HCT116 (cell line): ENCODE measurements at regions of chr1 and their contacts with region 1.

Region 1: GRCh38 chr1:169809370-169810095 is 14.8 kb upstream of the METTL18 start:
- DNase-seq: peak; percentile 21
- ATAC-seq: peak; percentile 68
- H3K4me3 ChIP-seq: no peak overlapping the region
- H3K27ac ChIP-seq: no peak overlapping the region
- H3K4me1 ChIP-seq: no peaks in the 10 kb centered on the region
- H3K27me3 ChIP-seq: no peaks in the 10 kb centered on the region
- CTCF ChIP-seq: peak in 2 of 3 experiments; percentile 60 to 62; a peak in 3 of 6 replicates
- POLR2A ChIP-seq: no peak
- RAD21 ChIP-seq: peak; percentile 77

Region 2: GRCh38 chr1:169546087-169546995 is 263.2 kb before region 1 on chr1:
- CTCF ChIA-PET with region 1: interaction called, 5 read pairs
- POLR2A ChIA-PET with region 1: no interaction called
- RAD21 ChIA-PET with region 1: no interaction called
- intact Hi-C with region 1: loop called (anchors 1 kb)
- DNase-seq: peak; percentile 65
- ATAC-seq: peak; percentile 89
- H3K4me3 ChIP-seq: no peak overlapping the region
- H3K27ac ChIP-seq: no peak overlapping the region
- H3K4me1 ChIP-seq: no peaks in the 10 kb centered on the region
- H3K27me3 ChIP-seq: no peaks in the 10 kb centered on the region
- CTCF ChIP-seq: peak; percentile 77 to 84 (median 82)
- POLR2A ChIP-seq: no peak
- RAD21 ChIP-seq: peak; percentile 92

Region 3: GRCh38 chr1:169586395-169587255 is 222.9 kb before region 1 on chr1 and contains the start of gene F5:
- CTCF ChIA-PET with region 1: interaction called, 15 read pairs
- POLR2A ChIA-PET with region 1: no interaction called
- RAD21 ChIA-PET with region 1: no interaction called
- intact Hi-C with region 1: loop called (anchors 5 kb)
- DNase-seq: peak; percentile 58
- ATAC-seq: peak; percentile 100
- H3K4me3 ChIP-seq: peak within 1 kb of the TSS; percentile 28 to 48
- H3K27ac ChIP-seq: no peak within 1 kb of the TSS
- H3K4me1 ChIP-seq: peaks cover 2 to 12% of the 10 kb centered on the region in 2 experiments; a peak in 3 of 4 replicates
- H3K27me3 ChIP-seq: no peaks in the 10 kb centered on the region
- CTCF ChIP-seq: peak; percentile 42 to 73 (median 68); a peak in 5 of 6 replicates
- POLR2A ChIP-seq: no peak
- RAD21 ChIP-seq: peak; percentile 73
- total RNA-seq, gene F5: 0.37 TPM

Region 4: GRCh38 chr1:169601093-169601881 is 208.2 kb before region 1 on chr1:
- CTCF ChIA-PET with region 1: interaction called, 21 read pairs
- POLR2A ChIA-PET with region 1: no interaction called
- RAD21 ChIA-PET with region 1: interaction called in 1 of 2 experiments, 3 read pairs
- intact Hi-C with region 1: loop called (anchors 1 kb)
- DNase-seq: no peak
- ATAC-seq: peak; percentile 67
- H3K4me3 ChIP-seq: no peak overlapping the region
- H3K27ac ChIP-seq: no peak overlapping the region
- H3K4me1 ChIP-seq: no peaks in the 10 kb centered on the region
- H3K27me3 ChIP-seq: peaks cover 5% of the 10 kb centered on the region; the same call in 1 of the 2 replicates
- CTCF ChIP-seq: peak; percentile 25 to 59 (median 50); a peak in 4 of 6 replicates
- POLR2A ChIP-seq: no peak
- RAD21 ChIP-seq: peak; percentile 73

Region 5: DNA sequence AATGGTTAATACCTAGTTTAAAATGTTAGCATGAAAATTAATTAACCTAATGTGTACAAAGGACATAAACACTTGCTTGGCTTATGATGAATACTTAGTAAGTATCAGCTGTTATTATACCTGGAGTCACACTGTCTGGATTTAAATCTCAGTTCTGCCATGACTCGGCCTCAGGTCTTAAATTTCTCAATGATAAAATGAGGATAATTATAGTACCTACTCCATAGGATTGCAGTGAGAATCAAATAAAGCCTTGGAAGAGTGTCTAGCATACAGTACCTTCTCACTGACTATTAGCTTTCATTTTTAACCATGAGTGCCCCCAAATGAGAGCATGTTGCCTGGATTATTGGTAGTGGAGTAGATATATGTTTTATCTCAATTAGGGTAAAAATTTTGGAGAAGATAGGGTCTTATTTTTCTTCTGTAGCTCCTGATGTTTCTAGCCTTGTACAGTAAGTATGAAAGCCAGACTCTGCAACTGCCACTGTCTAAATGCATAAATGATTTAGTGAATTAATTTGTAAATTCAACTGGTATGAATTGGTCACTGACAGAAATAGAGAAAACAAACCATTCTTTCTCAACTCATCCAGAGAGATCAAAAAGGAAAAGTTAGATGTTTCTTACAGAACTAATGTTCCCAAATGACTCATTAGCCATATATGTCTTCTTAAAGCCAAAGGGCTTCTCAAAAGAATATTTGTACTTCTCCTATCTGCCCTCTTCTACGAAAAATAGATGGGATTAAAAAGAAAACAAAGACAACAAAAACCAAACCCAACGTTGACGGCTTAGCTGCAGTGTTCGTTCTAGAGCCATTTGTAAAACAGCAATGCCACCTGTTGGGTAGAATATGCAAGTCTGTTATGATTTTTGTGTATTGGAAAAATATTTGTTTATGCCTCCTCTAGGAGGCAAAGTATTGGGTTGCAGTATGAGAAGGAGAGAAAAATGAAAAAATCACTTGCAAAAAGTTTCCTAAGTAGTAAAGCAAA is 1072.0 kb after region 1 on chr1:
- CTCF ChIA-PET with region 1: no interaction called
- POLR2A ChIA-PET with region 1: no interaction called
- RAD21 ChIA-PET with region 1: no interaction called
- intact Hi-C with region 1: loop called (anchors 10 kb)
- DNase-seq: peak; percentile 37
- ATAC-seq: peak; percentile 89
- H3K4me3 ChIP-seq: no peak overlapping the region
- H3K27ac ChIP-seq: no peak overlapping the region
- H3K4me1 ChIP-seq: no peaks in the 10 kb centered on the region
- H3K27me3 ChIP-seq: no peaks in the 10 kb centered on the region
- CTCF ChIP-seq: peak; percentile 41 to 90 (median 68)
- POLR2A ChIP-seq: no peak
- RAD21 ChIP-seq: peak; percentile 88